Posterior cingulate gyrus (tissue), 11 donors: ENCODE measurements at regions of chr9 and their contacts with region 1.

Region 1: DNA sequence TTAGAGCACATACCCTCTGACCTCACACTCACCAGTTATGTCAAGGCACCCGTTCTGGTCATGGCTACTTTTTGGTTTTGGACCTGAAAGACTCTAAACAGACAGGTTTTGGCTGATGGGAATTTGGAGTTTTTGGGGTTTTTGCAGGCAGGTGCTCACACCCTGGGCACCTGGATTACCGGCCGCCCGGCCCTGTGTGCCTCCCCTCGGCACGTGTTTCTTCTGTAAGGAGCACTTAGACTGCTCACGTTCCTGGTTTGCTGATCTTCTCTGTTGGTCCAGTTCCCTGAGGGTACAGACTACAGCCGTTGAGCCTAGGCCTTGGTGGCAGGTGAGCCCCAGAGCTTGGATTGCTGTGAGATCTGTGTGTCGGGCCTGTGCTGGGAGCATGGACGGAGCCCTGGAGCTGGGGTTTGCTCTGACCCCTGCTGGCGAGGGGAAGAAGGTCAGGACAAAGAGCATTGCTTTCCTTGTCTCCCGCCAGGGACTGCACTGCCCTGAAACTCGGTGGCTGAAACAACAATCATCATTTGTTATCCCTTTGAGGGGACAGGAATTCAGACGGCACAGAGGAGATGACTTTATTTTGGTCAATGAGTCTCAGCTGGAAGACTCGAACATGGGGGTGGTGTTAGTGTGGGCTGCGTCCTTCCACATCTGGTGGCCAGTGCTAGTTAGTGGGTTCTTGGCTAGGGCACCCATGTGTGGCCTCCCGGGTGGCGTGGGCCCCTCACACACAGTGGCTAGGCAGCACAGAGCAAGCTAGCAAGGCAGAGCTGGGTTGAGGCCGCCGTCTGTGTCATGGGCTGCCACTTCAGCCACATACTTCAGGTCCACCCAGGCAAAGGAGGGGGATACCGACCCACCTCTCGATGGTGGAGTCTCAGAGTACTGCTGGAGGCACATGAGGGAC is 76.4 kb downstream of the EHMT1 start:
- DNase-seq: peak; percentile 44 to 95 (median 72)

Region 2: DNA sequence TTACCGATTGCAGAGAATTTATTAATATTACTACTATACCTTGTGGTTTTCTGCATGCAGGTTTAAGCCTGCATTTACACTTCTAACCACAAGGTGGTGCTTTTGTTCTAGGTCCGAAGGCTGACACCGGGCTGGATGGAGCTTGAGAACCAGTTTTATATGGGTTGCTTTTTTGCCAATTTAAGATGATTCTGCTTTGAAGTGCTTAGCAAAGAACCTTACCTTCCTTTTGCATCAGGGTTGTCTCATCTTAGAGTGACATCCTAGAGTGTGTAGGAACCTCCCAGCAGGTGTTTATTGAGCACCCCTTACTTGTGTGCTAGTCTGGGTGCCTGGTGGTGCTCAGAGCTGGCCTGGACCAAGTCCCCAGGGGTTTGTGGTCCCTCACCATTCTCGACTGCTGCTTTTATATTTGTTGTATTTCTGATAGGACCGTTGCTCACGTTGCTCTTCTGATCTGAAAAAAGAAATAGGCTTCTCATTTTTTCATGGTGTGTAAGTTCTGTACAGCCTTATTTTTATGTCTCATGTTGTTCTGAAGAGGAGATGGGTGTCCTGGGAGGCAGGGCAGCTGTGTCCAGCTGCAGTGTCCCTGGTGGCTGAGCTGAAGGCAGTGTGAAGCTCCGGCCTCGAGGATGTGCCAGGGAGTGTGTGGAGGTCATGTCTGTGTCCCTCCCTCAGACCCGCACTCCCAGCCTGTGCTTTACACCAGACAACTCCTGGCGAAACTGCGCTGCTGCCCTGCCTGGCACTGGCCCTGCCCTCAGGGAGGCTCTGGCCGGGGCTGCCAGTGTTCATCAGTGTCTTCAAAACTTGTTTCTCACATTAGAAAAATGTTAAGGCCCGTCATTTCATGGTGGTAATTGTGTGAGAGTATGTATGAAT is 22.1 kb before region 1 on chr9:
- intact Hi-C with region 1: loop called (anchors 2 kb)
- DNase-seq: peak in 3 of 10 donors; percentile 41 to 89 (median 80)